Prostate gland (tissue), 2 donors: ENCODE measurements at regions of chr2 and their contacts with region 1.

Region 1: DNA sequence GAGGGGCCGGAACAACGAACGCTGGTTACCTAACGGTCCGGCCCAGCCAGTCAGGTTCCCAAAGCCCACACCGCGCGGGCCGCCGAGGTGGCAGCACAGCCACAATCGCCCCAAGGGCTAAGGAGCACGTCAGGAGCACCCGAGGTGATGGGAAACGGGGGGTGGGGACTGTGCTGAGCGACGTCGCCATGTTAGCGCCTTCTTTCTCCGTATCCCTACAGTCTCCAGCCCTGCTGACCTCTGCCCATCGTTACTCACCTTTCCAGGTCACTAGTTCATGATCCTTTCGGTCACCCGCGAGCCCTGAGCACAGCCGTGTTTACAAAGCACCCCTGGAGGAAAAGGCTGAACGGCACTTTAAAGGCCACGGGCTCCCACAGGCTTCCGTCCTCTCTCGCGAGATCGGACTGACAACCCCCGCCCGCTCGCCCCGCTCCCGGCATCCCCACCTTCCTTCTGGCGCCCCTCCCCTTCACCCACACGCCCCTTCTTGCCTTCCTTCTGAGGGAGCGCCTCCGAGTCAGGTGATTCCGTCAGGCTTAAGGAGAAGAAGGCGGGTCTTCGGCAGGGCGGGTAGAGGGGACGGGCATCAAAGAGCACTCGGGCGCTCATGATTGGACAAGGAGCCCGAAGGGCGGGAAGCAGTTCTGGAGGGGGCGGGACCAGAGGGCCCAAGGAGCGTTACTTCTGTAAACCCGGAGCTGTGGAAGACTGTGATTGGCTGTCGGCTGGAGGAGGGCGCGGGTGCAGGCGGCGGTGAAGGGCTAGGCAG is at the start of gene ATF2:
- DNase-seq: peak; percentile 99
- H3K4me3 ChIP-seq: peak within 1 kb of the TSS; percentile 93 to 98
- H3K27ac ChIP-seq: peak within 1 kb of the TSS; percentile 94 to 95
- H3K4me1 ChIP-seq: peaks cover 7% of the 10 kb centered on the region
- H3K27me3 ChIP-seq: no peaks in the 10 kb centered on the region
- CTCF ChIP-seq: peak in 1 of 4 experiments; percentile 8
- POLR2A ChIP-seq: peak; percentile 85
- total RNA-seq, gene ATF2: 35.9 to 56.4 TPM

Region 2: DNA sequence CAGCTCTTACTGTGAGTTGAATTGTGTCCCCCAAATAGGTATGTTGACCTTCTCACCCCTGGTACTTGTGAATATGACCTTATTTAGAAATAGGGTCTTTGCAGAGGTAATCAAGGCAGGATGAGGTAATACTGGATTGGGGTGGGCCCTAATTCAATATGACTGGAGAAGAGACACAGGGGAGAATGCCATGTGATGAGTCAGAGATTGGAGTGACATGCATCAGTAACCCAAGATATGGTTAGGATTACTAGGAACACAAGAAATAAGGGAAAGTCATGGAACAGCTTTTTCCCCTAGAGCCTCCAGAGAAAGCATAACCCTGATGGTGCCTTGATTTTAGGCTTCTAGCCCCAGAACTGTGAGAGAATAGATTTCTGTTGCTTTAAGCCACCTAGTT is 50.6 kb after region 1 on chr2:
- intact Hi-C with region 1: no loop called
- DNase-seq: no peak
- H3K4me3 ChIP-seq: no peak overlapping the region
- H3K27ac ChIP-seq: no peak overlapping the region
- H3K4me1 ChIP-seq: no peaks in the 10 kb centered on the region
- H3K27me3 ChIP-seq: no peaks in the 10 kb centered on the region
- CTCF ChIP-seq: no peak
- POLR2A ChIP-seq: no peak

Region 3: GRCh38 chr2:175259164-175259563 is 91.2 kb after region 1 on chr2:
- intact Hi-C with region 1: no loop called
- DNase-seq: no peak
- H3K4me3 ChIP-seq: no peak overlapping the region
- H3K27ac ChIP-seq: no peak overlapping the region
- H3K4me1 ChIP-seq: no peaks in the 10 kb centered on the region
- H3K27me3 ChIP-seq: no peaks in the 10 kb centered on the region
- CTCF ChIP-seq: no peak
- POLR2A ChIP-seq: no peak

Region 4: GRCh38 chr2:176093145-176093897 is 925.3 kb after region 1 on chr2:
- intact Hi-C with region 1: loop called (anchors 5 kb)
- DNase-seq: no peak
- H3K4me3 ChIP-seq: peak overlapping the region; percentile 42 to 43
- H3K27ac ChIP-seq: peak overlapping the region; percentile 72 to 80
- H3K4me1 ChIP-seq: no peaks in the 10 kb centered on the region
- H3K27me3 ChIP-seq: peaks cover 15% of the 10 kb centered on the region
- CTCF ChIP-seq: peak in 2 of 4 experiments; percentile 3 to 15
- POLR2A ChIP-seq: no peak

Region 5: DNA sequence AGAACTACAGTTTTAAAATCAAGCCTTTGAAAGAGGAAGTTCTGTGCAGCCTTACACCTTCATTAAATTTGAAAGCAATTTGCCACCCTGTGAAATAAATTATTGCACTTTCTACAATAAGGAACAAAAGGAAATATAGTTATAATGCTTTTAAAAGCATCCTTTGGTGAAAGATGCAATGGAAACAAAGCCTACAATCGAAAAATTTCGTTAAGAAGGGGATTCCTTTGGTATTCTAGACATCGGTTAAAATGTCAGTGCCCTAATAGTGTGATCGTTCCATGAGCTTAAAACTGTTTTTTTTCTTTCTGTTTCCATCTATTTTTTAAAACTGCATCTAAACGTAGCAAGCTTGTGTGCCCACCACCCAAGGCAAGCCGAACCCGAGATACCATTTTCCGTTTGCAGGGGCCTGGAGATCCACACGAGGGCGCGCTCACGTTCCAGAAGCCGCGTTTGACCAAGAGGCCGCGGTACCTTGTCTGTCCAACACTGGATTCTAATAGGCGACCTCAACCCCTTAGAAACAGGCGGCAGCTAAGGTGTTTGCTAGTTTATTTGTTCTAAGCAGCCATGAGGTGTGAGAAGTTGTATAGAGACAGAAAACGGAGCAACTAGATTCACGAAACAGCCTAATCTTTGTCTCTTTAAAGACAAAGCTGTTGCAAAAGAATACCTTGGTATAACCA is 943.1 kb after region 1 on chr2:
- intact Hi-C with region 1: no loop called
- DNase-seq: no peak
- H3K4me3 ChIP-seq: no peak overlapping the region
- H3K27ac ChIP-seq: peak overlapping the region in 1 of 2 donors; percentile 4
- H3K4me1 ChIP-seq: no peaks in the 10 kb centered on the region
- H3K27me3 ChIP-seq: peaks cover 17% of the 10 kb centered on the region
- CTCF ChIP-seq: peak in 3 of 4 experiments; percentile 39 to 52 (median 50)
- POLR2A ChIP-seq: no peak